MCF 10A (cell line): ENCODE measurements at regions of chr6 and their contacts with region 1.

Region 1: DNA sequence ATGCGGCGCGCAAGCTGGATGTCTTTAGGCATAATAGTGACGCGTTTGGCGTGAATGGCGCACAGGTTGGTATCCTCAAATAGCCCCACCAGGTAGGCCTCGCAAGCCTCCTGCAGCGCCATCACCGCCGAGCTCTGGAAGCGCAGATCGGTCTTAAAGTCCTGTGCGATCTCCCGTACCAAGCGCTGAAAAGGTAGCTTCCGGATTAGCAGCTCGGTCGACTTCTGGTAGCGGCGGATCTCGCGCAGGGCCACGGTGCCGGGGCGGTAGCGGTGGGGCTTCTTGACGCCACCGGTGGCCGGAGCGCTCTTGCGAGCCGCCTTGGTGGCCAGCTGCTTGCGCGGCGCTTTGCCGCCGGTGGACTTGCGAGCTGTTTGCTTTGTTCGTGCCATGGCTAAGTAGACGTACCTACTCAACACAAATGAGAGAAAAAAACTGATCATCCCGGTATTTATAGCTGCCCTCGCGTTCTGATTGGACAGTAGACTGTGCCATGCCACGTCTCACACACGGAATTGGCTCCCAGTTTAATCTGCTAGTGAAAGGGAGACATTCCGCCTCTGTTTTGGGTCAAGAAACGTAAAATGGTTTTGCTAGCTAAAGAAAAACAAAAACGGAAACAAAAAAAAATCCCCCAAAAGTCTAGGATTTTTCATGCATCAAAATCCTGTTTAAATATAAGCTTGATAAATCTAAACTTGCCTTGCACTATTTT is 40.1 kb downstream of the OR2B2 start:
- DNase-seq: peak; percentile 89
- H3K4me3 Mint-ChIP-seq: peak overlapping the region; percentile 79
- H3K27ac Mint-ChIP-seq: peak overlapping the region; percentile 93
- H3K4me1 Mint-ChIP-seq: peaks cover 2% of the 10 kb centered on the region
- H3K27me3 Mint-ChIP-seq: no peaks in the 10 kb centered on the region
- CTCF ChIP-seq: no peak

Region 2: GRCh38 chr6:27617700-27618689 is 254.1 kb before region 1 on chr6:
- CTCF ChIA-PET with region 1: no interaction called
- POLR2A ChIA-PET with region 1: no interaction called
- intact Hi-C with region 1: no loop called
- DNase-seq: peak; percentile 68
- H3K4me3 Mint-ChIP-seq: peak overlapping the region; percentile 89
- H3K27ac Mint-ChIP-seq: peak overlapping the region; percentile 86
- H3K4me1 Mint-ChIP-seq: peaks cover 6% of the 10 kb centered on the region
- H3K27me3 Mint-ChIP-seq: no peaks in the 10 kb centered on the region
- CTCF ChIP-seq: peak; percentile 9

Region 3: DNA sequence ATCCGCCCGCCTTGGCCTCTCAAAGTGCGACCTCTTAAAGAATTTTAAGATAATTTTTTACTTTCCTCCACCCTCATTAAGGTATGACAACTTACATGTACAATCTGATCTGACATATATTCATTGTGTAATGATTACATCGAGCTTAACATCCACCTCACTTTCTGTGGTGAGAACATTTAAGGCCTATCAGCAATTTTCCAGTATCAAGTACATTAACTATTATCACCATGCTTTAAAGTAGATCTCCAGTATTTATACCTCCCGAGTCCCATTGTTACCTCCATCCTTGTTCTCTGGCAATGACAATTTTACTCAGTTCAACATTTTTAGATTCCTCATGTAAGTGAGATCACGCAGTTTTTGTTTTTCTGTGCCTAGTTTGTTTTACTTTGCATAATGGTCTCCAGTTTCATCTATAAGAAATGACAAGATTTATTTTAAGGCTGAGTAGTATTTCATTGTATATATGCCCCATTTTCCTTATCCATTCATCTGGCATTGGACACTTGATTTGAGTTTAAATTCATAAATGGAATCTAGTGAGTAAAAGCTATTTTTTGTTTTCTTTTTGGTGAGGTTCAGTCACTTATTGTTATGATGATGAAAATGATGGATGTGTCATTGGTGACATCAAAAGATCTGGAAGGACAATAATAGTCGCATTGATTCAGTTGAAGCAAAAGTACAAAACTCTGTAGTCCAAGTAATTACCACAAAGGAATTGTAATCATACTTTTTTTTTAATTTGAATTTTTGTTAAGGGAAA is 46.9 kb before region 1 on chr6:
- CTCF ChIA-PET with region 1: interaction called, 3 read pairs
- POLR2A ChIA-PET with region 1: interaction called, 826 read pairs
- intact Hi-C with region 1: no loop called
- DNase-seq: no peak
- H3K4me3 Mint-ChIP-seq: peak overlapping the region; percentile 94
- H3K27ac Mint-ChIP-seq: peak overlapping the region; percentile 95
- H3K4me1 Mint-ChIP-seq: peaks cover 10% of the 10 kb centered on the region
- H3K27me3 Mint-ChIP-seq: no peaks in the 10 kb centered on the region
- CTCF ChIP-seq: no peak

Region 4: DNA sequence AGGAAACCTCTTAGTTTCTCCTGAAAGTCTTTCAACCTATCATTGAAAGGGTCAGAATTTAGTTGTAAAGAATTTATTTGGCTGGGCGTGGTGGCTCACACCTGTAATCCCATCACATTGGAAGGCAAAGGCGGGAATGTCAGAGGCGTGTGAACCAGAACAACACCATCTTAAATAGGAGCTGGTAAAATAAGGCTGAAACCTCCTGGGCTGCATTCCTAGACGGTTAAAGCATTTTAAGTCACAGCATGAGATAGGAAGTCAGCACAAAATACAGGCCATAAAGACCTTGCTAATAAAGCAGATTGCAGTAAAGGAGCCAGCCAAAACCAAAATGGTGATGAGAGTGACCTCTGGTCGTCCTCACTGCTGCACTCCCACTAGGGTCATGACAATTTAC is 10.5 kb after region 1 on chr6:
- CTCF ChIA-PET with region 1: no interaction called
- POLR2A ChIA-PET with region 1: interaction called, 644 read pairs
- intact Hi-C with region 1: no loop called
- DNase-seq: no peak
- H3K4me3 Mint-ChIP-seq: no peak overlapping the region
- H3K27ac Mint-ChIP-seq: no peak overlapping the region
- H3K4me1 Mint-ChIP-seq: no peaks in the 10 kb centered on the region
- H3K27me3 Mint-ChIP-seq: no peaks in the 10 kb centered on the region
- CTCF ChIP-seq: no peak

Region 5: DNA sequence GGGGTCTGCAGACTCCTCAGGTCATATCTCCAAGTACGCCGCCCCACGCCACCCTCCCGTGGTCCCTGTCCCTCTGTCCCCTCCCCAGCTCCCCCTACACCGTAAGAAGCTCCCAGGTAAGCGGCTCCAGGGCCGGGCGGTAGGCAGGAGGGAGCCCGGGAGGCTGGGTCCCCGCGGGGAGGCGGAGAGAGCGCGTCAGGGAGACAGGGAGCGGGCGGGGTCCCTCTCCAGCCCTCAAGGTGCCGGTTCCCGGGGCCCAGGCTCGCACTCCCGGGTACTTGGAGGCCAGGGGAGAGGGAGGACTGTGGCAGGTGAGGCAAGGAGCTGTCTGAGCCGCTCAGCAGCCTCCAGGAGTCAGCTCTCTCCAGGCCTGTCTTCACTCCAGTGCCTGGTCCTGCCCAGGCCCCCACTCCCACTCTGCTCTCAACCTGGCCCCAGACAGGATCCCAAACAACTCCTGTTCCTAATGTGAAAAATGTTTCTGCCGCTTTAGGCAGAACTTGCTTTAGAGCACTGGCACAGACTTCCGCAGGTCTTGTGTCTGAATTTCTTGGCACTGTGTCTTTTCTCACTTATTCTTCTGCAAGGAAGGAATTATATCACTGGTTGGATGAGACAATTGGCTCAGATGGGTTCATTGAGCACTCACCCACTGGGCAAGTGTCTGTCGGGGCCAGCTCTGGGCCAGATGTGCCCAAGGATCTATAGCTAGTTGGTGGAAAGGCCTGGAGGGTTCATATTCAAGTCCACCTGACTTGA is 1992.1 kb after region 1 on chr6:
- CTCF ChIA-PET with region 1: no interaction called
- POLR2A ChIA-PET with region 1: no interaction called
- intact Hi-C with region 1: no loop called
- DNase-seq: no peak
- H3K4me3 Mint-ChIP-seq: no peak overlapping the region
- H3K27ac Mint-ChIP-seq: no peak overlapping the region
- H3K4me1 Mint-ChIP-seq: no peaks in the 10 kb centered on the region
- H3K27me3 Mint-ChIP-seq: peaks cover 48% of the 10 kb centered on the region
- CTCF ChIP-seq: no peak